ENCODE measurements at regions of chr11 and their contacts with region 1.

Region 1: DNA sequence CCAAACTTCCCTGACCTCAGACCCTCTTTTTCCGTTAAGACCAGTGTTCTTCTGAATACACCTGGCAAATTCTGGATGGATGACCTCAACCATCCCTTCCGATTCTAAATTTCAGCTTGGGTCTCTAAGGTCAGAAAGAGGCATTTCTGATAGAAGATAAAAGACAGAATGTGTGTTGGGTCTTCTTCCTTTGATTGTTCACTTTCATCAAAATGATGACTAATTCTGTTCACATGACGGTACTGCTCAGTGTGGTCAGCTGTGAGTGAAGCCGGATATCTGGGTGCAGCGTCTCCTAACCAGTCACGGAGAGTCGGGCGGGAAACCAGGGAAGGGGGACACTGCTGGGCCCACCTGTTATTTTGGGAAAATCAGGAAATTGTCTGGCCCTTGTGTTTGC is 151.6 kb upstream of the NAV2 start:
- DNase-seq: no peak
- H3K4me3 ChIP-seq: no peak overlapping the region
- CTCF ChIP-seq: no peak
- POLR2A ChIP-seq: no peak

Region 2: DNA sequence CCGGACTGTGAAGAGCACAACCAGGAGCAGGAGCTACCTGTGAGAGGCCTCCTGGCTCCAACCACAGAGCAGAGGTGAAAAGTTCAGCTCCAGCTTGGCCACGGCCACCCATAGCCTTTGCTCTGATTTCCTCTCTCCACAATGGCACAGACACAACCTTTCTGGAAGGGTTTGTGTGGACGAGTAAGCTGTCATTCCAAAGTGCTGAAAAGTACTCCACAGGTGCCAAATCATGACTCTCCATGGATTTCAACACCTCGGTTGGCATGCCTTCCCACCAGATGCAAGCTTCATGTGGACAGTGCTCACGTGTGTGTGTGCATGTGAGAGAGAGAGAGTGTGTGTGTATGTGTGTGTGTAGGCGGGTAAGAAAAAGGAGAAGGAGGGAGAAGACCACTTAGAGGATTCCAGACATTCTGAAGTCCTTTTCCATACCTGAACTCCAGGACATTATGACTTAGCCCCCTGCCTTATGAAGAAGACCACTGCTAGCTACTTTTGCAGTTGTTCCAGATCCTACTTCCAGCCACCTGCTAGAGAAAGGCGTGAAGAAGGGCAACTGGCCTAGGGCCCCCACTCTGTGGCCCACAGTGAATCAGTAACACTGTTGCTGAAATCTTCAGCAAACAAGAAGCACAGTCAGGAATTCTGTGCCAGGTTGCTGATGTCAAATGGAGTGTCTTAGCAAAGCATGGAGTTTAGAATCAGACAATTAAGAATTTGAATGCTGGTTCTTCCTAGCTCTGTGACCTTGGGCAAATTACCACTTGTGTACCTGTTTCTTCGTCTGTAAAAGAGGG is 137.7 kb after region 1 on chr11:
- intact Hi-C with region 1: no loop called
- DNase-seq: peak; percentile 86 to 95
- H3K4me3 ChIP-seq: no peak overlapping the region
- CTCF ChIP-seq: no peak
- POLR2A ChIP-seq: no peak

Region 3: DNA sequence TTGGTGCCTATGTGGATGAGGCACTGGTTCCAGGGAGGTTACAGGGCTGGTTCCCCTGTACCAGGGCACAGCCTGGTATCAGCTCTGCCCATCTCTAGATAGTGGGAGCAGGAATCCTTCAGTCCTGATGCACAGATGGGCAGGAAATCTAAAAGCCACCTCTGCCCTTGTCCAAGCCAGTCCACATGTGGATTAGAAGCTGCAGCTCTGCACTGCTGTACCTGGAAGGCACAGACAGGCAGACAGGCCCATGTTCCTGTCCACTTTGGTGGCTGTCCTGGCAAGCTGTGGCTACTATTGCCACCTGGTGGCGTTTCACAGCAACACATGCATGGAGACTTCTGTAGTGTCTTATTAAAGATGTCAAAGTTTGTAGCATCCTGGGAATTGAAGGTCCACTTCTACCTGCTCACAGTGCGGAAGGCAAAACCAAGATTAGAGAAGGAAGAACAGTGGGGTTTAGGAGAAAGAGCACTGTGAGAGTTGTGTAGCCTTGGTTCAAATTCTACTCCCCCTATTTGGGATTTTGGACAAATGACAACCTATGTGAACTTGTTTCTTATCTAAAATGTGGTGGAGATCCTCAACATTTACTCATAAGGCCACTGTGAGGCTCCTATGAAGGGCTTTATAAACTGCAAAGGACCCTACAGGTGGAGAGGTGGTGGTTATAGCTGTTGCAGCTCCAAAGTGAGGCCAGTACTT is 181.7 kb after region 1 on chr11:
- intact Hi-C with region 1: loop called (anchors 2 kb)
- DNase-seq: peak; percentile 63 to 96
- H3K4me3 ChIP-seq: no peak overlapping the region
- CTCF ChIP-seq: peak in 1 of 3 donors; percentile 77
- POLR2A ChIP-seq: no peak

Region 4: DNA sequence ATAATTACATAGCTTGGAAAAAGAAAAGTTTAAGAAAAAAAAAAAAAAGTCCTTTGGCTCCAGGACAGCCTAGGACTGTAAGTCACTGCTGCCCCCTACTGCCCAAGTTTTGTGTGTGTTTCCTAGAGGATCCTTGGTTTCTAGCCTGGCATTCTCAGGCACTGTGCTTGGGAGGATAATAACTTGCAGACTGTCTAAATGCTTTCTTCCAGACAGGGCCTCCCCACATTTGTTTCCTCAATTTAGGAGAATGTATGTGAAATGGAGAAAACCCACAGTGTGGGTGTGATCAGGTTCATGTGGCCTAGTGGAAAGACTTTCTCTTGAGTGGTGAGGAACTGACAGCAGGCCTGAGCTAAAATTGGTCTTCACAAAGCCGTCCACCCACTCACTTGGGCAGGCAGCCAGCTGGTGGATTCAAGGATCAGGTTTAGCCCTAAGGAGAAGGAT is 342.6 kb after region 1 on chr11:
- intact Hi-C with region 1: loop called (anchors 5 kb)
- DNase-seq: peak; percentile 55 to 92
- H3K4me3 ChIP-seq: no peak overlapping the region
- CTCF ChIP-seq: no peak
- POLR2A ChIP-seq: no peak